Activated T-helper 1 cell treated with anti-CD3 and anti-CD28 coated beads, Interleukin-12 subunit alpha, Interleukin-12 subunit beta, Interleukin-2, Interleukin-4 antibody, amounts not matched to agents 30 ng/mL and 10 ng/mL and 1 ng/mL, durations not matched to agents 14 hours and 24 hours and 36 hours (primary cell): ENCODE measurements at regions of chr10 and their contacts with region 1.

Region 1: DNA sequence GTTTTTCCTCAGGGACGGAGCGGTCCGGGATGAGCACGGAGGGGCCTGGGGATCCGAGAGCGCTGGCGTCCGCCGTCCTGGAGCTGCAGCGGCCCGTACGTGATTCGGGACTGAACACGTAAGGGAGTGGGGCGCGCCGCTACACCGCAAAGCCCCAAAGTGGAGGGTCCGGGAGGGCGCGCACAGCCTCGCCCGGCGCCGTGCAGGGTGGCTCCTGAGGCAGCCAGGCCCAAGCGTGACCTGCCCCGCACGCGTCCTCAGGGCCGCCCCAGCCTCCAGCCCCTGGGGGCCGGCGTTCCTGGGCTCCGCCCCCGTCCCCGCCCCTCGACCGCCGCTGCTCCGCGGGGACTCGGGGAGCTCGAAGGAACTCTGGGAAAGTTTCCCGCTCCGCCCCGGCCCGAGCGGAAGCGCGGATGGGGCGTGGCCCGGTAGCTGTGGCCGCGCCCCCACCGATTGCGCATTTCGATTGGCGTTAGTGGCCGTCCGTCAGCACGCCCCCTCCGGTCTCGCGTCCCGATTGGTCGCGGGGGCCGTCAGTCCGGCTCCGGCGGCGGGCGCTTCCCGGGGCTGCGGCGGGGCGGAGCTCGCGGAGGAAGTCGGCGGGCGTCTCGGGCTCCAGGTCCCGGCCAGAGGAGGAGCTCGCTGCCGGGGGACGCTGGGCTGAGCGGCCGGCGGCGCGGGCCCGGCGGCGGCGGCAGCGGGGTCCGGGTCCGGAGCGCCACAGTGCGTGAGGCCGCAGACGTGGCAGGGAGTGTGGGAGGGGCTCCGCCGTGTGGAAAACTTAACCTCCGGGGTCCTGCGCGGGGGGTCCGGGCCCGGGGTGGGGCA is at the starts of genes ANKRD16 and FBH1:
- DNase-seq: peak; percentile 99
- H3K4me3 Mint-ChIP-seq: peak within 1 kb of the TSS; percentile 91
- H3K27ac Mint-ChIP-seq: peak within 1 kb of the TSS; percentile 76
- H3K4me1 Mint-ChIP-seq: peaks cover 52% of the 10 kb centered on the region
- H3K27me3 Mint-ChIP-seq: no peaks in the 10 kb centered on the region
- total RNA-seq, gene ANKRD16: 11.3 and 12.4 TPM in 2 replicates
- total RNA-seq, gene FBH1: 66.9 and 70.6 TPM in 2 replicates

Region 2: DNA sequence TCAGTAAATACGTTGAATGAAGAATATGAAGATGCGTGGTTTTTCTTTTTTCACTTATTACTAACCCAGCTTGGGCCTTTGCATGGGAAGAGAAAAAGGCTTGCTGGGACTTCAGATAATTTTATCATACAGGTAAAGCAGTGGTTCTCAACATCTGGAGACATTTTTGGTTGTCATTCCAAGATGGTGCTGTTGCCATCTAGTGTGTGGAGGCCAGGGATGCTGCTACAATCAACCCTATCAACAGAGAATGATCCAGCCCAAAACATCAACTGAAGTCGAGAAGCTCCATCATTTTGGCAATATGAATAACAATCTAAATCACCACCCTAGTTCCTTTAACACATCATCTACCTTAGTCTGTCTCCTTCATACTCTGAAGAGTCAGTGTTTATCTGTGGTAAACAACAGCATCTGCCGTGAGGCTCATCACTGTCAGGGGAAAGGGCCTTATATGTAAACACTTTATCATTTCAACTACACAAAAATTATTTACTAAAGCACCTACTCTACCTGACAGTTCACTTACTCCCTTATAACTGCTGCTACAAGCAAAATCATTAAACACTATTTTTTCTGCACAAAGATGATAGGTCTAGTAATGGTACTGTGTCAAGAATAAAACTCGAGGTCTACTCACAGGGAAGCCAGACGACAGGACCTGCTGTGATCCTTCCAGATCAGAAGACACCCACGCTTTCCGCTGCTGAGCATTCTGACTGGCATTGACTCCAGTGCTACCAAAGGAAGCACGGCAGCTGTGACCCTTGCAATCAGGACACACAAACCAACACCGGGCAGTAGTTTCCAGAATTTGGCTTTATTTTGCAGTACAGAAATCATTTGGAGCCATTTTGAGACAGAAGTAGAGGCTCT is 125.2 kb before region 1 on chr10:
- intact Hi-C with region 1: loop called (anchors 2 kb)
- DNase-seq: no peak
- H3K4me3 Mint-ChIP-seq: no peak overlapping the region
- H3K27ac Mint-ChIP-seq: peak overlapping the region; percentile 27
- H3K4me1 Mint-ChIP-seq: peaks cover 19% of the 10 kb centered on the region
- H3K27me3 Mint-ChIP-seq: no peaks in the 10 kb centered on the region

Region 3: DNA sequence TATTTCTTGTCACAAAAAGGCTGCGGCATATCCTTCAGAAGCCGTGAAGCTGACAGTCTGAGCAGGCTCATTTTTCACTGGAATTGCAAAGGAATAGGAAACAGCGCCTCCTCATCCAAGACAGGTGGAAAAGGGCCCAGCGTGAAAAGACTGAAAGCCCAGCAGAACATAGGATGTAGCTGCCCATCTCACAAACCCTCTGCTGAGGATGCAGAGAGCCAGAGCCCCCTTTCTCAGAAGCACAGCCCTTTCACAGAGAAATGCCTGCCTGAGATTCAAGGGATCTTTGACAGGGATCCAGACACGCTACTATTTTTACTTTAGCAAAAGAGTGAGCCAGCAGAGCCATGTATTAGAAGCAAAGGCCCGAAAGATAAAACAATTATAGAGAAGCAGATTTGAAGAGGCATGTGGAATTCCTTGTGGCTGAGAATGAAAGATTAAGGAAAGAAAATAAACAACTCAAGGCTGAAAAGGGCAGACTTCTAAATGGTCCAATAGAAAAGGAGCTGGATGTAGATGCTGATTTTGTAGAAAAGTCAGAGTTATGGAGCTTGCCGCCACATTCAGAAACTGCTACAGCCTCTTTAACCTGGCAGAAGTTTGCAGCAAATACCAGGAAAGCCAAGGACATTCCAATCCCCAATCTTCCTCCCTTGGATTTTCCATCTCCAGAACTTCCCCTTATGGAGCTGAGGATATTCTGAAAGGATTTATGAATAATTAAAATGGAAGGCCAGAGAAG is 113.5 kb before region 1 on chr10:
- intact Hi-C with region 1: loop called (anchors 1 kb)
- DNase-seq: no peak
- H3K4me3 Mint-ChIP-seq: peak overlapping the region; percentile 58
- H3K27ac Mint-ChIP-seq: peak overlapping the region; percentile 91
- H3K4me1 Mint-ChIP-seq: peaks cover 44% of the 10 kb centered on the region
- H3K27me3 Mint-ChIP-seq: no peaks in the 10 kb centered on the region

Region 4: GRCh38 chr10:5873515-5873995 is 16.3 kb before region 1 on chr10:
- intact Hi-C with region 1: loop called (anchors 1 kb)
- DNase-seq: peak; percentile 59
- H3K4me3 Mint-ChIP-seq: peak overlapping the region; percentile 43
- H3K27ac Mint-ChIP-seq: no peak overlapping the region
- H3K4me1 Mint-ChIP-seq: peaks cover 6% of the 10 kb centered on the region
- H3K27me3 Mint-ChIP-seq: no peaks in the 10 kb centered on the region

Region 5: DNA sequence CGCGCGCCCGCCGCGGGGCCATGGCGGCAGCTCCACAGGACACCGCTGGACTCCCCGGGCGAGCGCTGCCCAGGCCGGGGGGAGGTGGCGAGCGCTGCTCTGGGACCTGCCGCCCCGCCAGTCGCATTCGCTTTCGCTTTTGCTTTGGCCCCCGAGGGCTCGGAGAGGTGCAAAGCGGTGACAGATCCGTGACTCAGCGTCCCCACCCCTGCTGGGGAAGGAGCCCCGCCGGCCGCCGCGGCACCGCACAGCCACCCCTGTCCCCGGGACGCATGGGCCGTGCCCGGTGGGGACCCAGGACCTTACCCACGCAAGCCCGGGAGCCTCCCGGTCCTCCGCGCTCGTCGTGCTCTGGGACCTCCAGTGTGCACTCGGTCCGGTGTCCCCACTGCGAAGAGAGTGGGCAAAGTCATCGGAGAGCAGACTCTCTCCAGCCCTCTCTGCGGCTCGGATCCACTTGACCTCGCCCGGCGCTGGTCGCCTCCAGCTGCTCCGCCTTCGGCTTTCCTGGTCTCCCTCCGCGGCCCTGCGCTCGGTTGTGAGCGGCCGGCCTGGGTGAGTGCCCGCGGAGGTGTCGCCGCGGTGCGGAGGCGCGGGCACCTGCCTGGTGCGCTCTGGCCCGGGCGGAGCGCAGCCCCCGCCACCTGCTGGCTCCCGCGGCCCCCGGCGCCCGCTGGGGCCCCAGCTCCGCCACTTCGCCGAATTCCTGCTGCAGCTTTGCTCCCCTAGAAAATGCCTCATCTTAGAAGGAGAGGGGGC is 87.8 kb after region 1 on chr10 and contains the start of gene IL15RA:
- intact Hi-C with region 1: loop called (anchors 1 kb)
- DNase-seq: peak; percentile 88
- H3K4me3 Mint-ChIP-seq: peak within 1 kb of the TSS; percentile 93
- H3K27ac Mint-ChIP-seq: peak within 1 kb of the TSS; percentile 90
- H3K4me1 Mint-ChIP-seq: peaks cover 31% of the 10 kb centered on the region
- H3K27me3 Mint-ChIP-seq: peaks cover 3% of the 10 kb centered on the region
- total RNA-seq, gene IL15RA: 23.4 and 24.4 TPM in 2 replicates

Region 6: GRCh38 chr10:6058682-6059475 is 169.0 kb after region 1 on chr10:
- intact Hi-C with region 1: no loop called
- DNase-seq: no peak
- H3K4me3 Mint-ChIP-seq: peak overlapping the region; percentile 100
- H3K27ac Mint-ChIP-seq: peak overlapping the region; percentile 99
- H3K4me1 Mint-ChIP-seq: peaks cover 54% of the 10 kb centered on the region
- H3K27me3 Mint-ChIP-seq: no peaks in the 10 kb centered on the region

Region 7: GRCh38 chr10:6088721-6089390 is 199.0 kb after region 1 on chr10 and contains the start of gene RBM17:
- intact Hi-C with region 1: loop called (anchors 2 kb)
- DNase-seq: peak; percentile 98
- H3K4me3 Mint-ChIP-seq: peak within 1 kb of the TSS; percentile 95
- H3K27ac Mint-ChIP-seq: peak within 1 kb of the TSS; percentile 88
- H3K4me1 Mint-ChIP-seq: peaks cover 63% of the 10 kb centered on the region
- H3K27me3 Mint-ChIP-seq: no peaks in the 10 kb centered on the region
- total RNA-seq, gene RBM17: 265 and 283 TPM in 2 replicates